ENCODE measurements at regions of chr10 and their contacts with region 1.

Region 1: DNA sequence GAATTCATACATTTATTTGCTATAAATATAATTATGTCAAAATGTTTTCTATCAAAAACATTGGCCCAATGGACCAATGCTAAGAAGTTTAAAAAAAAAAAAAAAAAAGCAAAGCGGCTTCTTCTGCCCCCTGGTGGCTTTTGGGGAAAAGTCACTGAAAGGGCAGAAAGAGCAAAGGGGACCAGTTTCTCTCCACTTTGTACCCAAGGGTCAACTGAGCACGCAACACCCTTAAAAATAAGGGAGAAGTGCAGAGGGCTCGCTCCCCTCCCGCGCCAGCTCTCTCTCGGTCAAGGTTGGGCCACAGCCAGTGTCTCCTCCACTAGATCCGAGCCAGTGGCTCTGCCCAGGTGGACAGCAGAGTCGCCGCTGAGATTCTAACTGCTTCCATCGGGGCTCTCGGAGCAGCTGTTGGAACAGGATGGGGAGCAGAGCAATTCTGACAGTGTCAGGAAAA is 136.4 kb upstream of the FGFR2 start:
- H3K4me3 Mint-ChIP-seq: no peak overlapping the region
- H3K27ac Mint-ChIP-seq: no peak overlapping the region
- H3K4me1 Mint-ChIP-seq: peaks cover 17% of the 10 kb centered on the region
- H3K27me3 Mint-ChIP-seq: peaks cover 66% of the 10 kb centered on the region

Region 2: DNA sequence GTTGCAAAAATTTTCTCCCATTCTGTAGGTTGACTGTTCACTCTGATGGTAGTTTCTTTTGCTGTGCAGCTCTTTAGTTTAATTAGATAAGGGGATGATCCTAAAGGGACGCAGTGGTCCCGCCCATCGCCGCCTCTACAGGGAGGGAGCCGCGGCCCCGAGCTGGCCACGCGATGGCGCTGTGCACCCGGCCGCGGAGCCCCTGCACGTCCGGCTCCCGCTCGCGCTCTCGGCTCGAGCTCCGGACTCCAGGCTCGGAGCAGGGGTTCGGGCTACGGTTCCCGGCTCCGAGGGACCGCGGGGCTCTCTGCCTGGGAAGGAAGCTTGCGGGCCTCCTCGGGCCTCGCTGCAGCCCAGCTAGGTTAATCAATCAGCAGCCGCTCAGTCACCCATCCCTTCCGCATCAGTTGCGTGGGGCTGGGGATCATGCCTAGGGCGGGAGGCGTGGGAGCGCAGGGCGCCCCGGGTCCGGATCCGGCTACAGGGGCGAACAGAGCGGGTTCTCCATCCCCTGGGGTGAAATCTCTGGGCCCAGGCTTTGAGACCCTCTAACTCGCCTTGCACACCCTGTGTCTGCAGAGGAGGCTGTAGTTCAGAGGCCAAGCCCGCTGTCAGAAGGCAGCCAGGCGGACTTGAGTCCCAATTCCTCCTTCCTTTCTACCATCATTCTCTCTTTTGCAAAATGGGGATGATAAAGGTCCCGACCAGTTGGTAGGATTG is 785.6 kb before region 1 on chr10:
- intact Hi-C with region 1: loop called (anchors 5 kb)
- H3K4me3 Mint-ChIP-seq: peak overlapping the region; percentile 42
- H3K27ac Mint-ChIP-seq: no peak overlapping the region
- H3K4me1 Mint-ChIP-seq: no peaks in the 10 kb centered on the region
- H3K27me3 Mint-ChIP-seq: peaks cover 67% of the 10 kb centered on the region

Region 3: GRCh38 chr10:122213766-122214165 is 479.1 kb after region 1 on chr10:
- intact Hi-C with region 1: no loop called
- H3K4me3 Mint-ChIP-seq: no peak overlapping the region
- H3K27ac Mint-ChIP-seq: no peak overlapping the region
- H3K4me1 Mint-ChIP-seq: no peaks in the 10 kb centered on the region
- H3K27me3 Mint-ChIP-seq: no peaks in the 10 kb centered on the region

Measured in dendritic cell treated with granulocyte-macrophage colony-stimulating factor and Interleukin-4, amounts not matched to agents 40 ng/mL and 50 ng/mL, for 4 days (primary cell).